ENCODE measurements at regions of chr3 and their contacts with region 1.

Region 1: GRCh38 chr3:112407214-112407887 is 74.4 kb downstream of the CD200 start:
- DNase-seq: no peak
- H3K4me3 Mint-ChIP-seq: no peak overlapping the region
- H3K27ac Mint-ChIP-seq: peak overlapping the region; percentile 68
- H3K4me1 Mint-ChIP-seq: peaks cover 29% of the 10 kb centered on the region
- H3K27me3 Mint-ChIP-seq: peaks cover 6% of the 10 kb centered on the region

Region 2: GRCh38 chr3:112384769-112385168 is 22.6 kb before region 1 on chr3:
- intact Hi-C with region 1: loop called (anchors 1 kb)
- DNase-seq: no peak
- H3K4me3 Mint-ChIP-seq: no peak overlapping the region
- H3K27ac Mint-ChIP-seq: peak overlapping the region; percentile 73
- H3K4me1 Mint-ChIP-seq: peaks cover 66% of the 10 kb centered on the region
- H3K27me3 Mint-ChIP-seq: no peaks in the 10 kb centered on the region

Region 3: DNA sequence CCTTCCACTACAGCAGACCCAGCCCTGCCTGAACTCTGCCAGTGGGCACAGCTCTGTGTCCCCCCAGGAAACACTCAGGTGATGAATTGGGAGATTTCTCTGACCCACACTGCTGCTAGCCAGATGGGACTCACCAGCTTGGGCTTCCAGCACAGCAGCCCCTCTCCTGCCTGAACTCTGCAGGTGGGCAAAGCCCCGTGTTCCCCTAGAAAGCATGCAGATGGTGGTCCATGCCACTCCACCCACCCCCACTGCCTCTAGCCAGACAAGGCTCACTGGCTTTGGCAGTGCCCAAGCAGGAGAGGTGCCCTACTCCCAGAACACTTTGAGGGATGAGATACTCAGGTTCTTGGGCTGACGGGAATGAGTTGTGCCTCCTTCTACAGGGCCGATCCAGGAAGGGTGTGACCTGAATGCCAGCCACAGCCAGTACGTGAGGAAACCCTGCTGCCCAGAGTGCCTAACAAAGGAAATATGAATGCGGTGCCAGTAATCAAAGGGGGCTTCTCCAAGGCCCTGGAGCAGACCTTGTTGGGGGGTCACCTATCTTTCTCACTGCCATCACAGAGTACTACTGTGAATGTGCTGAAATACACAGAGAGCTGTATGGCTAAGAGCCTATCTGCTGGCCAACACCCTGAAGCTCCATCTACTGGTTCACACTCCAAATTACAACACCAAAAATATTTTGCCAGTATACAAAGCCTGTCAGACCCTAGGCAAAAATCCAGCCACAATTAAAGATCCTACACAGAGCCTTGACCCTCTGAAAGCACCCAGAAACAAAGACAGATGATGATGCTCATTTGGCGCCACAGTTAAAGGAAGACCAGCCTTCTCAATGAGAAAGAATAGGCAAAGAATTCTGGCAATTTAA is 30.0 kb after region 1 on chr3:
- intact Hi-C with region 1: loop called (anchors 2 kb)
- DNase-seq: no peak
- H3K4me3 Mint-ChIP-seq: no peak overlapping the region
- H3K27ac Mint-ChIP-seq: no peak overlapping the region
- H3K4me1 Mint-ChIP-seq: peaks cover 54% of the 10 kb centered on the region
- H3K27me3 Mint-ChIP-seq: no peaks in the 10 kb centered on the region

Measured in activated T-helper 2 cell treated with anti-CD3 and anti-CD28 coated beads, Interferon-gamma antibody, Interleukin-2, Interleukin-4, amounts not matched to agents 10 μg/mL and 5 μg/mL and 100 μg/mL, durations not matched to agents 14 hours and 24 hours and 36 hours (primary cell).